Activated naive CD4-positive, alpha-beta T cell treated with anti-CD3 and anti-CD28 coated beads for 36 hours (primary cell): ENCODE measurements at regions of chr14 and their contacts with region 1.

Region 1: DNA sequence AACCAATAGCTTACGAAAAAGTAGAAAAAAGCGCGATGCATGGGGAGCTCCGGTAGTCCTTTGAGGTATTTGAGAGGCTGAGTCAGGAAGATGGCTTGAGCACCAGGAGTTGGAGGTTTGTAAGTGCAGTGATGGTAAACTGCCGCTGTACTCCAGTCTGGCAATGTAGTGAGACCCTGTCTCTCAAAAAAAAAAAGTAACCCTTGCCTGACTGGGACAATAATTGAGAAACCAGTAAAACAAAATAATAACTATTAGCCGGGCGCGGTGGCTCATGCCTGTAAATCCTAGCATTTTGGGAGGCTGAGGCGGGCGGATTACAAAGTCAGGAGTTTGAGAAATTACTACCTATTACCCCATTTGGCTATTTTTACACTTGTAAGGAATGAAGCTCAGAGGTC is 632 bp upstream of the ACOT2 start:
- DNase-seq: peak; percentile 69
- H3K4me3 Mint-ChIP-seq: peak overlapping the region; percentile 83
- H3K27ac Mint-ChIP-seq: peak overlapping the region; percentile 95
- H3K4me1 Mint-ChIP-seq: peaks cover 46% of the 10 kb centered on the region
- H3K27me3 Mint-ChIP-seq: no peaks in the 10 kb centered on the region

Region 2: DNA sequence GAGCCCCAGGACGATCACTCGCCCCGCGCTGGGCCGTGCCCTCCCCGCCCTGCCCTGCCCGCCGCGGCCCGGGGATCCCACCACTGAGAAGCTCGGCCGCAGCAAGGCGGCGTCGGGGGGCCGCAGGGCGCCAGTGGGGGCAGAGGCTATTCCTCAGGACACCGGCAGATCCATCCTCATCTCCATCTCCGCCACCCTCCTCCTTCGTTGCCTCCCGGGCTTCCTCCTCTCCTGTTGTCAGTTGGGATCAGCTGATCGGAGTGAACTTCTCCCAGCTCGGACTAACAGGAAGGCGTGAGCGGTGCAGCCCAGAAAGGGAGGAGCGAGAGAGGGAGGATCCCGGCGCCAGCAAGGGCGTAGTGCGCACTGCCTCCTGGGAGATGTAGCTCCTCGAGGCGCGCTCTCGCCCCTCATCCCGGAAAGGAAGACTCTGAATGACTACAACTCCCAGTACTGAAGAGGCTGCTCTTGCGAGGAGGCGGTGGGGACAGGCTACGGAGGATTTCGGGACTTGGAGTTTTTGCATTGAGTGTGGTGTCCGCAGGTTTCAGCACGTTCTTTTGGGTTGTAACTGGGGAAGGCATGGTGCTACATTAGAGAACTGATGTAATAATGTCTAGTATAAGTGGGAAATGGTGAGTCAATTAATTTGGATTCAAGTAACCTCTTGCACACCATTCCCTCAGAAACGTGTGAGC is 541.4 kb before region 1 on chr14 and contains the start of gene ZFYVE1:
- CTCF ChIA-PET with region 1: no interaction called
- intact Hi-C with region 1: loop called (anchors 1 kb)
- DNase-seq: peak; percentile 97
- H3K4me3 Mint-ChIP-seq: peak within 1 kb of the TSS; percentile 92
- H3K27ac Mint-ChIP-seq: peak within 1 kb of the TSS; percentile 80
- H3K4me1 Mint-ChIP-seq: peaks cover 39% of the 10 kb centered on the region
- H3K27me3 Mint-ChIP-seq: no peaks in the 10 kb centered on the region
- total RNA-seq, gene ZFYVE1: 8.5 to 9.2 TPM

Region 3: DNA sequence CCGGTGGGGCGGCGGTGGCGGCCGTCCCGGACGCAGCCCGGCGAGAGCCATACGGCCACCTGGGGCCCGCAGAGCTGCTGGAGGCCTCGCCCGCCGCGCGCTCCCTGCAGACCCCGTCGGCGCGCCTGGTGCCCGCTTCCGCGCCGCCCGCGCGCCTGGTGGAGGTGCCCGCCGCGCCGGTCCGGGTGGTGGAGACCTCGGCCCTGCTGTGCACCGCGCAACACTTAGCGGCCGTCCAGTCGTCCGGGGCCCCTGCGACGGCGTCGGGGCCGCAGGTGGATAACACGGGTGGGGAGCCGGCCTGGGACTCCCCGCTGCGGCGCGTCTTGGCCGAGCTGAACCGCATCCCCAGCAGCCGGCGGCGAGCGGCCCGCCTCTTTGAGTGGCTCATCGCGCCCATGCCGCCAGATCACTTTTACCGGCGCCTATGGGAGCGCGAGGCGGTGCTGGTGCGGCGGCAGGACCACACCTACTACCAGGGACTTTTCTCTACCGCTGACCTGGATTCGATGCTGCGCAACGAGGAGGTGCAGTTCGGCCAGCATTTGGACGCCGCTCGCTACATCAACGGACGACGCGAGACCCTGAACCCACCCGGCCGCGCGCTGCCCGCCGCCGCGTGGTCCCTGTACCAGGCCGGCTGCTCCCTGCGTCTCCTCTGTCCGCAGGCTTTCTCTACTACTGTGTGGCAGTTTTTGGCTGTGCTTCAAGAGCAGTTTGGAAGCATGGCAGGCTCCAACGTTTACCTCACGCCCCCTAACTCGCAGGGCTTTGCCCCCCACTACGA is 76.9 kb before region 1 on chr14:
- CTCF ChIA-PET with region 1: interaction called, 5 read pairs
- intact Hi-C with region 1: loop called (anchors 1 kb)
- DNase-seq: peak; percentile 74
- H3K4me3 Mint-ChIP-seq: peak overlapping the region; percentile 78
- H3K27ac Mint-ChIP-seq: no peak overlapping the region
- H3K4me1 Mint-ChIP-seq: peaks cover 42% of the 10 kb centered on the region
- H3K27me3 Mint-ChIP-seq: no peaks in the 10 kb centered on the region

Region 4: DNA sequence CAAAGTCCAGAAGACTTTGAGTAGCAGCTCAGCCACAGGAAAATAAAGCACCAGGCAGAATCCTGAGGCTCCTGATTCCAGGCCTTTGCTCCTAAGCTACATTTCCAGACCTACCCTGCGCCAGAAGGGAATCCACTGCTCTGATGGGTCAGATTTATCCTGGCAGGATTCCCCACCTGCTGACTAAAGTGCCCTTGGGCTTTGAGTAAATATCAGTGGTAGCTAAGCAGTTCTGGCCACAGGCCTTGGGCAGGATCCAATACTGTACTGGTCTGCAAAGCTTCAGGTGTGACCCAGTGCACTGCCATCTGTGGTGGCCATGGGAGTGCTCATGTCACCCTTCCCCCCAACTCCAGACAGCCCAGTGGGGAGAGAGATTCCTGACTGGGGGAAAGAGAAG is 41.8 kb before region 1 on chr14:
- CTCF ChIA-PET with region 1: interaction called, 4 read pairs
- intact Hi-C with region 1: loop called (anchors 5 kb)
- DNase-seq: no peak
- H3K4me3 Mint-ChIP-seq: no peak overlapping the region
- H3K27ac Mint-ChIP-seq: no peak overlapping the region
- H3K4me1 Mint-ChIP-seq: no peaks in the 10 kb centered on the region
- H3K27me3 Mint-ChIP-seq: no peaks in the 10 kb centered on the region

Region 5: DNA sequence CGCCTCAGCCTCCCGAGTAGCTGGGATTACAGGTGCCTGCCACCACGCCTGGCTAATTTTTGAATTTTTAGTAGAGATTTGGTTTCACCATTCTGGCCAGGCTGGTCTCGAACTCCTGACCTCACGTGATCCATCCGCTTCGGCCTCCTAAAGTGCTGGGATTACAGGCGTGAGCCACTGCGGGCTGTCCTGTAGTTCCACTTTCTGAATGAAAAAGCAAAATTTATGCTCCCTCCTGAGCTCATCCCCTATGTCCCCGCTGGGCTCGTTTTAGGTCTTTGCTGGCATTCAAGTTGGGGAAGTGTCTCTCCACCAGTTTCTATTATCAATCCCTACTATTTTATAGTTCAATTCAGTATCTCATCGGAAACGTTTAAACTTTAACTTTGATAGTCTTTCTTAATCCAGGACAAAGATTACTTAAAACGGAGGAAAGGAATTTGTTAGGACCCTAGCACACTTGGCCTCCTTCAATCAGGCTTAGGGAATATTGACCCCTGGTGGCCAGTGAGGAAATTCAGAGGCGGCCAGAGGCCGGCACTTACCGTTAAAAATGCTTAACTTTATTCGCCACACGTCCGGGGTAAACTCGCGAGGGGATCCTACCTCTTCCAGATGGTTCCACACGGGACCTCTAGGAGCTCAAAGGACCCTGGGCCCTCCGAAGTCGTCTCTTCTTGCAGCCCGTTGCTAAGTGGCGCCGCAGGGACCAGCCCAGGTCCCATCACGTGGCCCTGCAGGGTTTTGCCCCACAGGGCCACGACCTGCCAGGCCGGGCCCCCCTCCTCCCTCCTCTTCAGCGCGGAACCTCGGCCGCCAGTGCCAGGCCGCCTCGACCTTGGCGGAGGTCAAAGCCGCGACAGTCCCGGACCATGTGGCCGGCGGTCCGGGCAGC is 65.0 kb after region 1 on chr14:
- CTCF ChIA-PET with region 1: interaction called, 8 read pairs
- intact Hi-C with region 1: loop called (anchors 1 kb)
- DNase-seq: peak; percentile 74
- H3K4me3 Mint-ChIP-seq: peak overlapping the region; percentile 65
- H3K27ac Mint-ChIP-seq: no peak overlapping the region
- H3K4me1 Mint-ChIP-seq: peaks cover 5% of the 10 kb centered on the region
- H3K27me3 Mint-ChIP-seq: peaks cover 6% of the 10 kb centered on the region

Region 6: GRCh38 chr14:73713803-73714655 is 145.6 kb after region 1 on chr14 and contains the start of gene PNMA1:
- CTCF ChIA-PET with region 1: interaction called, 4 read pairs
- intact Hi-C with region 1: loop called (anchors 1 kb)
- DNase-seq: peak; percentile 84
- H3K4me3 Mint-ChIP-seq: peak within 1 kb of the TSS; percentile 99
- H3K27ac Mint-ChIP-seq: peak within 1 kb of the TSS; percentile 85
- H3K4me1 Mint-ChIP-seq: peaks cover 13% of the 10 kb centered on the region
- H3K27me3 Mint-ChIP-seq: no peaks in the 10 kb centered on the region
- total RNA-seq, gene PNMA1: 18.5 to 19.2 TPM

Region 7: DNA sequence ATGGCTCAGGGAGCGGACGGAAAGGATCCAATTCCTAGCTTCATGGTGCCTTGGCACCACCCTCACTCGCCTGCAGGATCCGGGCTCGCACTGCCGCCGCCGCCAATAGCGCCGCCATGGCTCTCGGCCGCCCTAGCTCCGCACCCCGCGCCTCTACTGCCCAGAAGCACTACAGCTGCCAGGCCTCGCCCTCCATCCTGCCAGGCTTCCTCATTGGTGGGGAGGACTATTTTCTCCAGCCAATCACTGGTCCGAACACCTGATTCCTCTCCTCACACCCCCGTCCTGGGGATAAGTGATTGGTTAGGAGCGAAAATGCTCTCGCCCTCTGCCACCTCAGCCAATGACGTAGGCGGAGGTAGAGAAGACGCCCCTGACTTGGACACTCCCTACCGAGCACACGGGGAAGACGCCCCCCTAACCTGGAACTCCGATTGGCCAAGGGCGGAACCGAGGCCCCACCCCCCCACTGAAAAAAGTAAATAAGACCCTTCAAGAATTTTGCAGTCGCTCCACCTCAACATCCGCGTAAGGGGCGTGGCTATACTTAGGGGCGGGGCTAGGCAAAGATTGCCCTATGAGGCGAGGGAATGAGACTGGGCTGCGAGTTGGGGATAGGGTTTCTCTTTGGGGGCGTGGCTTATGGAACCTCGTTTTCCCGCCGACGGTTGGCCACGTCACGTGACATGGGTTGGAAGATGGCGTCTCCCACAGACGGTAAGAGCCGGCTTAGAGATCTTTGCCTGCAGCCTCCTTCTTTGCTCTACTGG is 516.1 kb after region 1 on chr14 and contains the starts of genes ALDH6A1 and LIN52:
- CTCF ChIA-PET with region 1: no interaction called
- intact Hi-C with region 1: loop called (anchors 1 kb)
- DNase-seq: peak; percentile 100
- H3K4me3 Mint-ChIP-seq: peak within 1 kb of the TSS; percentile 99
- H3K27ac Mint-ChIP-seq: peak within 1 kb of the TSS; percentile 95
- H3K4me1 Mint-ChIP-seq: peaks cover 38% of the 10 kb centered on the region
- H3K27me3 Mint-ChIP-seq: no peaks in the 10 kb centered on the region
- total RNA-seq, gene ALDH6A1: 24.0 to 25.3 TPM
- total RNA-seq, gene LIN52: 10.7 to 13.6 TPM